Mammary epithelial cell (primary cell): ENCODE measurements at regions of chr3 and their contacts with region 1.

Region 1: GRCh38 chr3:55620351-55621025 is 133.4 kb upstream of the WNT5A start:
- DNase-seq: peak; percentile 41
- H3K4me3 ChIP-seq: no peak overlapping the region
- H3K27ac ChIP-seq: no peak overlapping the region
- H3K4me1 ChIP-seq: peaks cover 31% of the 10 kb centered on the region
- H3K27me3 ChIP-seq: no peaks in the 10 kb centered on the region
- CTCF ChIP-seq: no peak

Region 2: DNA sequence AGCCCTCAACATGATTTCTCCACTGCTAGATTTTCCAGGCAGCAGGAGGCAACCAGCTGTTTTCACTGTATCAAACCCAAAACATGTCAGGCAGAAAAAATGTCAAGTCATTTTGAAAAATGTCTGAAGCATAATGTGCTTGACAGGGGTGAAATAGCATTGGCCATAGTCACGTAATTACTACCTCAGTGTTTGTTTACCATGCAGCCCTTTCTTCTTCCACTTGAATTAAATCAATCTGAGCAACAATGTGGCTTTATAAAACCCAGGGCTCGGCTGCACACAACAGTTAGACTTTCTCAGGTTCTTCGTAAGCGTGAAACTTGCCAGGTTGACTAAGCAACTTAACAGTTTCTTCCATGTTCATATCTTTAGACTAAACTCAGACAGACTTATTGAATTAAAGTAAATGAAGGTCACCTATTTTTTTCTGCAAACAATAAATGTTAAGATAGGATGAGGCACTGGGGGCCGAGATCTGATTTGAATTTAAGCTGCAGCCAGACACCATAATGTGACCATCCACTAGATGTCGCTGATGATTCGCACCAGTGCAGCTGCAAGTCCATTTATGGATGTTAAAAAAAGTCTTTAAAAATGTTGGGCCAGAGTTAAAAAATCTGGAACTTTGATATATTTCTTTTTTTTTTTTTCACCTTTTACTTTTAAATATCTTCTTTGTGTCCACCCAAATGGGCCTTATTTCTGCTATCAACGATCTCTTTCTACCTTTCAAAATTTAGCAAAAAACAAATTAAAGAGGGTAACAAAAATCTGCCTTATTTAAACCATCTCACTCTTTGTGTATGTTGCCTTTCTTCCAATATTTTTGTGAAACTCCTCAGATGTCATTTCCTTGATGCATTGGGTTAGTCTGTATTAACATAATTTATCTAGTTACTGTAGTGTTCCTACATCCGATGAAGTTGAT is 1192.3 kb before region 1 on chr3:
- CTCF ChIA-PET with region 1: no interaction called
- dilution Hi-C with region 1: no loop called
- in situ Hi-C with region 1: no loop called
- intact Hi-C with region 1: loop called (anchors 5 kb)
- DNase-seq: peak; percentile 26
- H3K4me3 ChIP-seq: no peak overlapping the region
- H3K27ac ChIP-seq: no peak overlapping the region
- H3K4me1 ChIP-seq: no peaks in the 10 kb centered on the region
- H3K27me3 ChIP-seq: no peaks in the 10 kb centered on the region
- CTCF ChIP-seq: peak; percentile 86 to 90

Region 3: GRCh38 chr3:54870423-54870822 is 750.1 kb before region 1 on chr3:
- CTCF ChIA-PET with region 1: no interaction called
- dilution Hi-C with region 1: no loop called
- in situ Hi-C with region 1: no loop called
- intact Hi-C with region 1: loop called (anchors 5 kb)
- DNase-seq: peak; percentile 69
- H3K4me3 ChIP-seq: no peak overlapping the region
- H3K27ac ChIP-seq: no peak overlapping the region
- H3K4me1 ChIP-seq: no peaks in the 10 kb centered on the region
- H3K27me3 ChIP-seq: no peaks in the 10 kb centered on the region
- CTCF ChIP-seq: peak; percentile 52 to 66

Region 4: DNA sequence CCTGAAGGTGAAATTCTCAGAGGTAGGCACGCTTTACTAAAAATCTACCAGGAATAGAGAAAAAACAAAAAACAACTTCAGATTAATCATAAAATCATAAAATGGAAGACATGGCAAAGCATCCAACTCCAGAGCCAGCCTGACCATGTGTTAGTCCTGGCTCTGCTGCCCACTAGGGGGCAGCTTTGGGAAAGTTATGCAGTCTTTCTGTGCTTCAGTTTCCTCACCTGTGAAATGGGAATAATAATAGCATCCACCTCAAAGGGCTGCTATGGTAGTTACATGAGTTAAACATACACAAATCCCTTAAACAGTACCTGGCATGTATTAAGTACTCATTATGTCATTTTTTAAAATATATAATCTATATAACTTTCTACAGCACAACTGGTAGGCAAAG is 185.7 kb before region 1 on chr3:
- CTCF ChIA-PET with region 1: no interaction called
- dilution Hi-C with region 1: no loop called
- in situ Hi-C with region 1: no loop called
- intact Hi-C with region 1: loop called (anchors 2 kb)
- DNase-seq: peak; percentile 28
- H3K4me3 ChIP-seq: no peak overlapping the region
- H3K27ac ChIP-seq: no peak overlapping the region
- H3K4me1 ChIP-seq: no peaks in the 10 kb centered on the region
- H3K27me3 ChIP-seq: no peaks in the 10 kb centered on the region
- CTCF ChIP-seq: peak; percentile 64 to 75

Region 5: DNA sequence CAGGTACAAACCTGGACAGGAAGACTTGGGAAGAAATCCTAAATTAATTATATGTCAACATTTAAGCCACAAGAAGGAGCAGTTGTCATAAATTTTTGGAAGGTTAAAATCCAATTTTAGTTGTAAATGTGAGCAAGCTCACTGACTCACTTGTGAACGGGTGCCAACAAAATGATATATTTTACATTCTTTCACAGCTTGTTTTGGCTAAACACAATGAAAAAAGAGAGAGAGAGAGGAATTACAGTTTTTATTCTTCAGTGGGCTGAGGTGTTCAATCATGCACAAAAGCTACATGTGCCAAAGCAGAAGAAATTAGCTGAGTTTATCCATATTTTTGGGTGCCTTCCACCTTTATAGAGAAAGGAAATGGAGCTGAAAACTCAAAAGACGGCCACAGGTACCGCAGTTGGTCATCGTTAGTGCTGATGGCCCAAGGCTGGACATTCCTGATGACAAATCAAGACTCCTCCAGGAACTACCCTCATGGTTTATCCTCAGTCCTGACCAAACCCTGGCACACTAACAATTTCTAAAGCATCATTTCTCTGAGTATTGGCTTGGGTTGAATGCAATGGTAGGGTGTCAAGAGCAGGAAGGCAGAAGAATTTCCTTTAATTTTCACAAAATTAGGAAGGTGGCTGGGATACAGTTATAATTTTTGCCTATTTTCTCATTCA is 95.8 kb before region 1 on chr3:
- CTCF ChIA-PET with region 1: no interaction called
- dilution Hi-C with region 1: no loop called
- in situ Hi-C with region 1: no loop called
- intact Hi-C with region 1: loop called (anchors 1 kb)
- DNase-seq: peak; percentile 80
- H3K4me3 ChIP-seq: no peak overlapping the region
- H3K27ac ChIP-seq: peak overlapping the region; percentile 1
- H3K4me1 ChIP-seq: peaks cover 29% of the 10 kb centered on the region
- H3K27me3 ChIP-seq: no peaks in the 10 kb centered on the region
- CTCF ChIP-seq: no peak

Region 6: GRCh38 chr3:55639884-55640765 is 19.6 kb after region 1 on chr3:
- CTCF ChIA-PET with region 1: no interaction called
- dilution Hi-C with region 1: no loop called
- in situ Hi-C with region 1: no loop called
- intact Hi-C with region 1: no loop called
- DNase-seq: peak; percentile 87
- H3K4me3 ChIP-seq: no peak overlapping the region
- H3K27ac ChIP-seq: peak overlapping the region; percentile 12
- H3K4me1 ChIP-seq: peaks cover 36% of the 10 kb centered on the region
- H3K27me3 ChIP-seq: no peaks in the 10 kb centered on the region
- CTCF ChIP-seq: no peak

Region 7: GRCh38 chr3:55701997-55702396 is 81.5 kb after region 1 on chr3:
- CTCF ChIA-PET with region 1: no interaction called
- dilution Hi-C with region 1: no loop called
- in situ Hi-C with region 1: no loop called
- intact Hi-C with region 1: no loop called
- DNase-seq: no peak
- H3K4me3 ChIP-seq: no peak overlapping the region
- H3K27ac ChIP-seq: no peak overlapping the region
- H3K4me1 ChIP-seq: no peaks in the 10 kb centered on the region
- H3K27me3 ChIP-seq: peaks cover 2% of the 10 kb centered on the region
- CTCF ChIP-seq: no peak

Region 8: DNA sequence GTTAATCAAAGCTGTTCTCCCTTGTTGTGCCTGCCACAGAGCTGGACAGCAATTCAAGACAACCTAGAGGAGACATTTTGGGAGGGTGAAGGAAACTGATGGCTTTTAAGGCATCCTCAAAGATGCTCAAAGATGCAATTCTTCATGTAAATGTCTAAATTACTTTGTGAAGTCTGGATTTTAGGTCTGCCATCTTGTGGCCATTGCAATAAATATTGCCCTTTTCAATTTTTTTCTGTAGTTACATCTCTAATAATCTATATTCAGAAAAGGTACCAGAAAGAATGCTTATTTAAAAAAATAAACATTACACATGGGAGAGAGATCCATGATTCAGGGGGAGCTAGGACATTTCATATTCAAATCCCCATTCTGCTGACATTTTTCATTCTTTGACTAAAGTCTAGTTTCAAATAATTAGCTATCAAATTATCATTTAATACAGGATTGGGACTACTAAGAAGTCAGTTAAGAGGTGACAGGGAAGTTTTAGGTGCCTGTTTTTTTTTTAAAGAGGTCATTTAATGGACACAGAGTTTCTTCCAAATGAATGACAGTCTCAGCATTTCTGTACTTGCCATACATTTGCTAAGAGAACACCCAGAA is 126.4 kb after region 1 on chr3:
- CTCF ChIA-PET with region 1: no interaction called
- dilution Hi-C with region 1: no loop called
- in situ Hi-C with region 1: no loop called
- intact Hi-C with region 1: loop called (anchors 1 kb)
- DNase-seq: no peak
- H3K4me3 ChIP-seq: no peak overlapping the region
- H3K27ac ChIP-seq: no peak overlapping the region
- H3K4me1 ChIP-seq: peaks cover 11% of the 10 kb centered on the region
- H3K27me3 ChIP-seq: no peaks in the 10 kb centered on the region
- CTCF ChIP-seq: peak; percentile 35 to 50

Region 9: DNA sequence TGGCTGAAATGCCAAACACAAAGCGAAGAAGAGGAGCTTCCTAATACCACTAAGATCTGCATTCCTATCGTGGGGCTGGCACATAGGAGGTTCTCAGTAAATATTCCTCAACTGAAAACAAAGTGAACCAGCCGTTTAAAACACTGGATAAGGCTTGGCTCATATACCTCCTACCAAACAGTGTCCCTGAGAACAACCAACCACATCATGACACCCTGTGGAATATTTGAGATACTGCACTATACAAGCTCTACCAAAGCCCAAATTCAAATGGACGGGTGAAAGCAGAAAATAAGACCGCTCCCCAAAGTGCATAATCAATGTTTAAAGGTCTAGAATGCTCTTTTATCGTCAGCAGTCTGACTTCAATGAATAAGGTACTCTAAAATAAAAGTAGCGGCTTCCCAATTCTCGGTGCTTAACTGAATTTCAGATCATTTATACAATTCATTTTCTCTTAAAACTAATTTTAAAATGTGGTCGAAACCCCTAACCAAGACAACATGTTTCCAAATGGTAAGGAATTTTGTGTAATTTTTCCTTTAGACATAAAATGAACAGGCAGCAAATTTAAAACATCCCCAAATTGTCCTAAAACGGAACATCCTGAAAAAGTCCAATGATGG is 422.0 kb after region 1 on chr3:
- CTCF ChIA-PET with region 1: no interaction called
- dilution Hi-C with region 1: no loop called
- in situ Hi-C with region 1: no loop called
- intact Hi-C with region 1: loop called (anchors 1 kb)
- DNase-seq: peak; percentile 16
- H3K4me3 ChIP-seq: no peak overlapping the region
- H3K27ac ChIP-seq: no peak overlapping the region
- H3K4me1 ChIP-seq: no peaks in the 10 kb centered on the region
- H3K27me3 ChIP-seq: no peaks in the 10 kb centered on the region
- CTCF ChIP-seq: peak; percentile 54 to 70